Activated CD4-positive, alpha-beta T cell treated with anti-CD3 and anti-CD28 coated beads, Interleukin-2, amount 10 ng/mL, durations not matched to agents 24 days and 14 days (primary cell): ENCODE measurements at regions of chr2 and their contacts with region 1.

Region 1: DNA sequence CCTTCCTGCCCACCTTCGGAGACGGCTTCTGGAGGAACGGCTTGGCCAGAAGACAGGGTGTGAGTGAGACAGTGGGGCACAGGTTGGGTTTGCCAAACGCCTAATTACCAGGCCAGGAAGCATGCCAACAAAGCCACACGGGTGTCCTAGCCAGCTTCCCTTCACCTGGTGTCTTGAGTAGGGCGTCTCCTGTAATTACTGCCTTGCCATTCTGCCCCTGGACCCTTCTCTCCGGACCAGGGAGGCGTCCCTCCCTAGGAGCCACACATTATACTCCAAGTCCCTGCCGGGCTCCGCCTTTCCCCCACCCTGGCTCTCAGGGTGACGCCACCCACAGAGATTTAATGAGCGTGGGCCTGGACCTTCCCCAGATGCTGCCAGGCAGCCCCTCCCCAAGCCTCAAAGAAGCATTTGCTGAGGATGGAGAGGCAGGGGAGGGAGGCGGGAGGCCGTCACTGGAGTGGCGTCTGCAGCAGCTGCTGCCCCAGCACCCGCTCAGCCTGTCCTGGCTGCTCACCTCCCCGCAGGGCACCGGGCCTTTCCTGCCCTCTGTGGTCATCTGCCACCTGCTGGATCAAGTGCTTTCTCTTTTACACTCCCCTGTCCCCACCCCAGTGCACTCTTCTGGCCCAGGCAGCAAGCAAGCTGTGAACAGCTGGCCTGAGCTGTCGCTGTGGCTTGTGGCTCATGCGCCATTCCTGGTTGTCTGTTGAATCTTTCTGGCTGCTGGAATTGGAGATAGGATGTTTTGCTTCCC is 20.7 kb downstream of the FOSL2 start:
- DNase-seq: no peak
- H3K4me3 Mint-ChIP-seq: no peak overlapping the region
- H3K27ac Mint-ChIP-seq: peak overlapping the region; percentile 25
- H3K4me1 Mint-ChIP-seq: peaks cover 50% of the 10 kb centered on the region
- H3K27me3 Mint-ChIP-seq: no peaks in the 10 kb centered on the region

Region 2: DNA sequence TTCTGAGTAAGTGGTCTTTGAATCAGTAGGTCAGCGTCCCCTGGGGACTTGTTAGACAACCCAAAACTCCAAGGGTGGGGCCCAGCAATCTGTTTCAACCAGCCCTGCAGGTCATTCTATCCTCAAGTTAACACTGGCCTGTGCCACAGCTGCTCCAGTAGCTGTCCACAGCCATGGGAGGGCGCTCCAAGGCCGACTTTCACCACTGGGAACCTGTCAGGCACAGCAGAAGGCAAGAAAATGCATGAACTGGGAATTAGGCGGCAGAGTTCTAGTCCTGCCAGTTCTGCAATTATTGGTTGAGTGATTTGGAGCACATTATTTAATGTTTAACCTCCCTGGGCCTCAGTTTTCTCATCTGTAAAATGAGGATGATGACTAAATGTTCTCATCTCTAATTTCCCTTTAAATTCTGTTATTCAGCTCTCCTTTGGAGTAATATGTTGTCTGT is 659.2 kb before region 1 on chr2:
- intact Hi-C with region 1: loop called (anchors 5 kb)
- DNase-seq: peak; percentile 94
- H3K4me3 Mint-ChIP-seq: no peak overlapping the region
- H3K27ac Mint-ChIP-seq: peak overlapping the region; percentile 25
- H3K4me1 Mint-ChIP-seq: peaks cover 8% of the 10 kb centered on the region
- H3K27me3 Mint-ChIP-seq: peaks cover 3% of the 10 kb centered on the region

Region 3: DNA sequence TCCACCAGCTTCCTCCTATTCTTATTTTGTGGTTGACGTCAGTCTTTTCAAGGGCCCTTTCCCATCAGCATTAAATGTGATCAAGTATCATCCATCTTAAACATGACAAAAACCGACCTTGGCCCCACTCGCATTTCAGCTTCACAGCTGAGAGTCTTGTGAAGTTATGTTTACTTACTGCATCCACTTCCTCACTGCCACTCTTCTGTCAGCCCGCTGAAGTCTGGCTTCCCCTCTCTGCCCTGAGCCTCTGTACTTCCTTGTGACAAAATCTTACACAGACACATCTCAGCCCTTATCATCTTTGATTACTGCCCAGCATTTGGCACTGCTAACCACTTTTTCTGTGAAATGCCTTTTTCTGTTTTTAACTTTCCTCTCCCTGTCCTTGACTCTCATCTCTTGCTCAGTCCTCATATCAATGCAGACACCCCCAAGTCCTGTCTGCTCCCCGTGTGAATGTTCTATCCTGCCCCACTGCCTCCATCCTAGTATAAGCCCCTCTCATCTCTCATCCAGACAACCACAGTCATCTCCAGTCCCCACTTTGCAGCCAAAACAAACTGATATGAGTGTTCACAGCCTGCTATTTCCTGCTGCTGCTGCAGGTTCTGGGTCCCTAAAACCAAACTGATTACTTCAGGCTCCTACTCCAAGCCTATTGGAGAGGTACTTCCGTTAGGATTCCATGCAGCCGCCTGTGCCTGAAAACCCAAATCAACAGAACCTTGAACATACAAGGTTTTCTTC is 10.7 kb after region 1 on chr2:
- intact Hi-C with region 1: loop called (anchors 2 kb)
- DNase-seq: peak; percentile 81
- H3K4me3 Mint-ChIP-seq: peak overlapping the region; percentile 62
- H3K27ac Mint-ChIP-seq: peak overlapping the region; percentile 82
- H3K4me1 Mint-ChIP-seq: peaks cover 39% of the 10 kb centered on the region
- H3K27me3 Mint-ChIP-seq: no peaks in the 10 kb centered on the region